ENCODE measurements at regions of chr12 and their contacts with region 1.

Region 1: GRCh38 chr12:92570056-92570753 is 132.6 kb upstream of the PLEKHG7 start:
- DNase-seq: no peak
- ATAC-seq: peak; percentile 95
- H3K4me3 Mint-ChIP-seq: no peak overlapping the region
- H3K27ac Mint-ChIP-seq: no peak overlapping the region
- H3K4me1 Mint-ChIP-seq: peaks cover 28% of the 10 kb centered on the region
- H3K27me3 Mint-ChIP-seq: no peaks in the 10 kb centered on the region
- CTCF ChIP-seq: peak; percentile 99

Region 2: DNA sequence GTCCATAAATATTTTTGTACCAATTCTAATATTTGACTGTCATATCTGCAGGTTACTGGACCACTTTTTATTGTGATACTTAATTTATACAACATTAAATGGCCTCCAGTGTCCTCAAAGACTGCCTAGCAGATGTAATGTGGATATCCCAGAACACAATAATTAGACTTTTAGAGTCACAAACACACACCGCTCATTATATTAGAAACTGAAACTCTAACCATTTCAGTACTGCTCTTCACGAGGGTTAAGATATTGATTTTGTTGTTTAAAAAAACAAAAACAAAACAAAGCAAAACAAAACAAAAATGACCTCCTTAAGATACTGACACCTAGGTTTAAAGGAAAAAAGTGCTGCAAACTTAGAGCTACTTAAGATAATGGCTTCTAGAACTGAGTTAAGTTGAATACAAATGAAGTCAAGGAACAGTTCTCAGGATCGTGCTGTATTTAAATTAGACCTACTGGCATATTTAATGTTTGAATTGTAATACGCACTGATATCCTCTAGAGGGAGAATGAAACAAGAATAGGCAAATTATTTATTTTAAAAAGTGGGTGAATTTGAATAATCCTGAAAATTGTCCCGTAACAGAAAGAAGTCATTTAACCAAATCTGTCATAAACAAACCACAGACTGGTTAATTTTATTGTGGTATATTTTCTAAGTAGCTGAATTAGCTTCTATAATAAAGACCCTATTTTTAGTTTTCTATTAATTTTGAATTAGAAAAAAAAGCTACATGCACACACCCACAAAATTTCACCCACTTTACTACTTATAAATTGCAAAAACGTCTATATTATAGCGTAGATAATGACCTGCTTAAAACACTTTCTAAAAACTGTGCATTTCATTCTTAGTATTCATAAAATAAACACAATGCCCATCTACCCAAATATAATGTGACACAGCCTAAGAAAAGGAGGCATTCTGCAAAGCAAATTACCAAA is 992.3 kb before region 1 on chr12:
- CTCF ChIA-PET with region 1: interaction called, 6 read pairs
- POLR2A ChIA-PET with region 1: no interaction called
- intact Hi-C with region 1: loop called (anchors 1 kb)
- DNase-seq: no peak
- ATAC-seq: peak; percentile 58
- H3K4me3 Mint-ChIP-seq: peak overlapping the region; percentile 70
- H3K27ac Mint-ChIP-seq: no peak overlapping the region
- H3K4me1 Mint-ChIP-seq: peaks cover 6% of the 10 kb centered on the region
- H3K27me3 Mint-ChIP-seq: peaks cover 7% of the 10 kb centered on the region
- CTCF ChIP-seq: peak; percentile 57

Region 3: GRCh38 chr12:92170050-92170449 is 400.2 kb before region 1 on chr12:
- CTCF ChIA-PET with region 1: interaction called, 5 read pairs
- POLR2A ChIA-PET with region 1: interaction called, 9 read pairs
- intact Hi-C with region 1: loop called (anchors 1 kb)
- DNase-seq: no peak
- ATAC-seq: no peak
- H3K4me3 Mint-ChIP-seq: peak overlapping the region; percentile 6
- H3K27ac Mint-ChIP-seq: peak overlapping the region; percentile 74
- H3K4me1 Mint-ChIP-seq: peaks cover 72% of the 10 kb centered on the region
- H3K27me3 Mint-ChIP-seq: no peaks in the 10 kb centered on the region
- CTCF ChIP-seq: no peak

Region 4: DNA sequence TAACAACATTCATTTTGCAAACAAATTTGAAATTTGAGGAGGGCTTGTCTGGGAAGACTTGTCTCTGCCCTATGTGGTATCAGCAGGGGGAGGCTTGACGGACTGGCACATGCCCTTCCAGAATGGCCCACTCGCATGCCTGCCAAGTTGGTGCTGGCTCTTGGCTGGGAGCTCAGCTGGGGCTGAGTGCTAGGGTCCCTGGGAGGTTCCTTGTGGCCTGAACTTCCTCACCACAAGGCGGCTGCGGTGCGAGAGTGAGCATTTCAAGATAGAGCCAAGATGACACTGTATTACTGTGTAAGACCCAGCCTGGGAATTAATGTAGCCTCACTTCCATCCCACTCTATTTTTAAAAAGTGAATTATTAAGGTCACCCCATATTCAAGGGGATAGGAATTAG is 139.1 kb before region 1 on chr12:
- CTCF ChIA-PET with region 1: interaction called, 4 read pairs
- POLR2A ChIA-PET with region 1: interaction called, 5 read pairs
- intact Hi-C with region 1: loop called (anchors 1 kb)
- DNase-seq: peak; percentile 27
- ATAC-seq: peak; percentile 60
- H3K4me3 Mint-ChIP-seq: no peak overlapping the region
- H3K27ac Mint-ChIP-seq: peak overlapping the region; percentile 94
- H3K4me1 Mint-ChIP-seq: peaks cover 80% of the 10 kb centered on the region
- H3K27me3 Mint-ChIP-seq: no peaks in the 10 kb centered on the region
- CTCF ChIP-seq: no peak

Region 5: GRCh38 chr12:92539113-92539749 is 31.0 kb before region 1 on chr12:
- CTCF ChIA-PET with region 1: interaction called, 6 read pairs
- POLR2A ChIA-PET with region 1: interaction called, 4 read pairs
- intact Hi-C with region 1: loop called (anchors 1 kb)
- DNase-seq: no peak
- ATAC-seq: peak; percentile 32
- H3K4me3 Mint-ChIP-seq: peak overlapping the region; percentile 73
- H3K27ac Mint-ChIP-seq: peak overlapping the region; percentile 97
- H3K4me1 Mint-ChIP-seq: peaks cover 79% of the 10 kb centered on the region
- H3K27me3 Mint-ChIP-seq: no peaks in the 10 kb centered on the region
- CTCF ChIP-seq: no peak

Region 6: DNA sequence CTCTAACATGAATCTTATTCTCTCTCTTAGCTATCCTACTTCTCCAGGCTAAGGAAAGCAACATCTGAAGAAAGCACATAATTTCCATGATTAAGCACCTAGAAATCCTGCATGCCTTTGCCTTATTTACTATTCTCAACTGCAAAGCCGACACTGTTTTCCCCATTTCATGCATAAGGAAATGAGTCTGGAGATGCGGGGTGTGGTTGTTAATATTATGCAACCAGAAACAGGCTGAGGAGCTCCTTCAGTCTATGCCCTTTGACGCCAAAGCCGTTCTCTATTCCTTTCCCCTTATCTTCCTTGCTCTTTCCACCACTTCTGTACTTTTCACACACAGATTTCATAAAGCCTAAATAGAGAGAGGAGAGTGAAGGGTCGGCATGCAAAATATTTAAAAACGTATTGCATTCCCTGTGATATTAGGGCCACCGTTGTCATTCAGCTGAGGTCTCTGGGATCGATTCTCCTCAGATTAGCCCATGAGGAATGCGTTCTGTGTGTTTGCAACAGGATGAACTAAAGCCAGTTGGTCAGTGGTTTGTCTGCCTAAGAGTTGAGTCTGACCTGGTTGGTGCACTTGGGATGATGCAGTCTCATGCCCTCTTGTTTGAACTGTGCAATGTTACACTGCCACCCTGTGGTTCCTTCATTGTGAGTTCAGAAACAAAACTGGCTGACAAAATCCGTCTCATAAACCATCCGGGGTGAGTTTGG is 79.5 kb after region 1 on chr12:
- CTCF ChIA-PET with region 1: interaction called, 14 read pairs
- POLR2A ChIA-PET with region 1: no interaction called
- intact Hi-C with region 1: loop called (anchors 1 kb)
- DNase-seq: no peak
- ATAC-seq: peak; percentile 78
- H3K4me3 Mint-ChIP-seq: no peak overlapping the region
- H3K27ac Mint-ChIP-seq: no peak overlapping the region
- H3K4me1 Mint-ChIP-seq: peaks cover 6% of the 10 kb centered on the region
- H3K27me3 Mint-ChIP-seq: no peaks in the 10 kb centered on the region
- CTCF ChIP-seq: peak; percentile 26

Region 7: DNA sequence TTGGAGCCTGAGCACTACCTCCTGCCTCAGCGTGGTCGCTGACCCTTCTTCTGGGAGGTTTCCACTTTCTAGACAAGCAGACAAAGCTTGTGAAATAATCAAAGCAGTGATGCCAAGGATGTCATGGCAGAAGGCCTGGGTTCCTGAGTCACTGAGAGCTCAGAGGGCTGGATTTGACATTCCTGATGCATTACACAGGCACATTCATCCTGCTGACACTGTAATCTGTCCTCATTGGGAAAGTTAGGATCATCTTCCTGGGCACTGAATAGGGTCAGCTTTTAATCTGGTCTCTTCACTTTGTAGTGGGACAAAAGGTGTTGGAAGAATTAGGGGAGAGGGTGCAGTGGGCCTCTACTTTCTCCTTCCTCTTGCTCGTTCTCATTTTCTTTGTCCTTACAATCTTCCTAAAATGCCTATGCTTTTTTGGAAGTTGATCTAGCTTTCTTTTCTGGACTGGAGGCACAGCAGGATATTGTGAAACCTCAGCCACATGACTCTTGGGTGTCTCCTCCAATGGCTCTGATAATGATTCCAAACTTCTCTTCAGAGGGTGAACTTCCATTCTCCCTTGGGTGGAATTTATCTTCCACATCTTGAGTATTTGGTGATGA is 329.3 kb after region 1 on chr12:
- CTCF ChIA-PET with region 1: no interaction called
- POLR2A ChIA-PET with region 1: no interaction called
- intact Hi-C with region 1: no loop called
- DNase-seq: no peak
- ATAC-seq: no peak
- H3K4me3 Mint-ChIP-seq: no peak overlapping the region
- H3K27ac Mint-ChIP-seq: no peak overlapping the region
- H3K4me1 Mint-ChIP-seq: peaks cover 9% of the 10 kb centered on the region
- H3K27me3 Mint-ChIP-seq: no peaks in the 10 kb centered on the region
- CTCF ChIP-seq: no peak